MCF 10A (cell line): ENCODE measurements at regions of chr10 and their contacts with region 1.

Region 1: GRCh38 chr10:72692057-72692910 is at the start of gene MCU:
- DNase-seq: peak; percentile 41
- H3K4me3 Mint-ChIP-seq: peak within 1 kb of the TSS; percentile 80
- H3K27ac Mint-ChIP-seq: peak within 1 kb of the TSS; percentile 17
- H3K4me1 Mint-ChIP-seq: peaks cover 45% of the 10 kb centered on the region
- H3K27me3 Mint-ChIP-seq: no peaks in the 10 kb centered on the region
- CTCF ChIP-seq: no peak
- total RNA-seq, gene MCU: 14.0 and 19.2 TPM in 2 replicates

Region 2: GRCh38 chr10:72364239-72364777 is 328.0 kb before region 1 on chr10:
- CTCF ChIA-PET with region 1: interaction called, 35 read pairs
- POLR2A ChIA-PET with region 1: interaction called, 9 read pairs
- intact Hi-C with region 1: loop called (anchors 1 kb)
- DNase-seq: peak; percentile 94
- H3K4me3 Mint-ChIP-seq: peak overlapping the region; percentile 45
- H3K27ac Mint-ChIP-seq: no peak overlapping the region
- H3K4me1 Mint-ChIP-seq: peaks cover 7% of the 10 kb centered on the region
- H3K27me3 Mint-ChIP-seq: no peaks in the 10 kb centered on the region
- CTCF ChIP-seq: peak; percentile 91

Region 3: GRCh38 chr10:72625608-72626443 is 66.5 kb before region 1 on chr10 and contains the start of gene MICU1:
- CTCF ChIA-PET with region 1: no interaction called
- POLR2A ChIA-PET with region 1: interaction called, 44 read pairs
- intact Hi-C with region 1: no loop called
- DNase-seq: peak; percentile 96
- H3K4me3 Mint-ChIP-seq: peak within 1 kb of the TSS; percentile 75
- H3K27ac Mint-ChIP-seq: peak within 1 kb of the TSS; percentile 26
- H3K4me1 Mint-ChIP-seq: peaks cover 10% of the 10 kb centered on the region
- H3K27me3 Mint-ChIP-seq: no peaks in the 10 kb centered on the region
- CTCF ChIP-seq: no peak
- total RNA-seq, gene MICU1: 25.5 and 34.8 TPM in 2 replicates

Region 4: DNA sequence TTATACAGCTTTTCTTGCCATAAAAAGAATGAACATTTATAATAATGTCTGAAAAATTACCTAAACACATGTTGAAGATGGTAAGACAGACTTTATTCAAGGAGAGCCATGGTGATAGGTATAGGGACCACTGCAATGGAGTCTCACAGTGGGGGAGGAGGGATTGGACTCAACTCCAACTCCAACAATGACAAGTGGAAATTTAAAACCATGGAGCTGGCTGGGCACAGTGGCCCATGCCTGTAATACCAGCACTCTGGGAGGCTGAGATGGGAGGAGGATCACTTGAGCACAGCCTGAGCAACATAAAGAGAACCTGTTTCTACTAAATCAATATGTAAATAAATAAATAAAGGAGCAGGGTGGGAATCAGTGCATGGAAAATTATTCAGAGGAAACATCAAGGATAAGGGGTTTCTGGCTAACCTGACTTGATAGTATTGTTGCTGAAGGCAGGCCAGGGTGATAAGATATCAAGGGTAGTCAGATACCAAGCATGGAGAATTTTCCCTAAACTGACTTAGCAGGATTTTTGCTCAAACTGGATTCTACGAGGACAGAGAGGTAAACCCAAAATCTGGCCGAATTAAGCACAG is 46.9 kb before region 1 on chr10:
- CTCF ChIA-PET with region 1: no interaction called
- POLR2A ChIA-PET with region 1: no interaction called
- intact Hi-C with region 1: no loop called
- DNase-seq: no peak
- H3K4me3 Mint-ChIP-seq: no peak overlapping the region
- H3K27ac Mint-ChIP-seq: no peak overlapping the region
- H3K4me1 Mint-ChIP-seq: no peaks in the 10 kb centered on the region
- H3K27me3 Mint-ChIP-seq: no peaks in the 10 kb centered on the region
- CTCF ChIP-seq: no peak

Region 5: DNA sequence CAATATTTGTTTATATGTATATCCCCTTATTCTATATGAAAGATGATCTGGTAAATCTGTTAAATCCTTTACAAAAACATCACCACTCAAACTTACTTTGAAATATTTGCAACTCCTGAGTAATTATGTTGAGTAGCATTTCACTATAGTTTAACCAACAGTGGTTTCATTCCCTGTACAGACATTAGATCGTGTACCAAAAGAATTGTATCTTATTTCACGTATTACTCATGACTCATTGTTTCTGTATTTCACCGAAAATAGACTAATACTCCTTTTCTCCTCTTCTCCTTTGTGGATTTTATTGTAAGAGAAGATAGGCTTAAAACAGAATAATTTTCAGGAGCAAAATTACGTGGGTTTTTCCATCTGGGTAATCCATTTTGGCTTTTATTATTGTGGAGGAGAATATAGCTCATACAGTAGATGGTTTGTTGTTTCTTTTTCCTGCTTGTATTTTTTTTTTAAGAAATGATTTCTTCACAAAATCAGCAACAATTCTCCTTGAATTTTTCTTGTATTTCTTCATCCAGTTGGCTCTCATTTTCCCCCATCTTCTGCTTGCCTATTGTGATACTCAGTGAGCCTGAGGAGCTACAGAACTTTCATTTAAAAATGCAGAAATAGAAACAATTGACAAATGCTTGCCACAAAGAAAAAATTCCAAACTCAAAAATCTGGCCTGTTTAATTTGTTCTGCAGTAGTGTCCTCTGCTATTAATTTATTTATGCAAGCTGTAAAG is 110.7 kb after region 1 on chr10:
- CTCF ChIA-PET with region 1: interaction called, 6 read pairs
- POLR2A ChIA-PET with region 1: interaction called, 10 read pairs
- intact Hi-C with region 1: no loop called
- DNase-seq: peak; percentile 48
- H3K4me3 Mint-ChIP-seq: peak overlapping the region; percentile 66
- H3K27ac Mint-ChIP-seq: peak overlapping the region; percentile 93
- H3K4me1 Mint-ChIP-seq: peaks cover 10% of the 10 kb centered on the region
- H3K27me3 Mint-ChIP-seq: no peaks in the 10 kb centered on the region
- CTCF ChIP-seq: no peak

Region 6: DNA sequence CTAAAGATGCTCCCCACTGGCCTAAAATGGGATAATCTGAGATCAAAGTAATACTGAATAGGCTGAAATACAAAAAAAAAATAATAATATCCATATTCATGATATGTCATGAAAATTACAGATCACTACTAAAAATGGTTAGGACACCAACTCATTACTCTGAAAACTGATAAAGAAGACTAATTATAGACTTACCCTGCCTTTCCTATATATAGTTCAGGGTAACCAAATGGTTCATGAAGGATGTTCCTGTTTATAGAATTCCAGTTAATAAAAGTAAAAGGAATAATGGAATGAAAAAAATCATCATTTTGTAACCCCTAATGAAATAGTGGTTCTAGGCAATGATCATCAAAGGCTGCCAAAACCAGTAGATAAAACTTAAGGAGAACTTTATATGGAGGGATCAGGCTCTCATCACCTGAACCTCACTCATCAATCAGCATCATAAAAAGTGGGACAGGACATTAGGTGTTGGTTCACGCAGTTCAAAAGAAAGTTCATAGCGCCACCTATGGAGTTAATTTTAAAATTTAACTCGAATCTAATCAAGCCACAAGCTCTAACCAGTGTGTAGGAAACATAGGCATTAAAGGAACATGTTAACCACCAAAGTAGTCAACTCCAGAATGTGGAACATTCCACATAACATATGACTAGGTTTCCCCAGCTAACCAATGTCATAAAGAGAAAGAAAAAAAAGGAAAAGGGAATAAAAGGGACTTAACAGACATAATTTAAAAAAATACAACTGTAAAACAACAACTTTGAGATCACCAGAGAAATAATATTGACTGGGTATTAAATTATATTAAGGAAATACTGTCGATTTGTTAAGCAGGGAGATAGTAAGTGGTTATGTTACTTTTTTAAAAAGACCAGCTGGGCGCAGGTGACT is 368.7 kb after region 1 on chr10:
- CTCF ChIA-PET with region 1: interaction called, 3 read pairs
- POLR2A ChIA-PET with region 1: no interaction called
- intact Hi-C with region 1: loop called (anchors 1 kb)
- DNase-seq: peak; percentile 65
- H3K4me3 Mint-ChIP-seq: no peak overlapping the region
- H3K27ac Mint-ChIP-seq: no peak overlapping the region
- H3K4me1 Mint-ChIP-seq: peaks cover 5% of the 10 kb centered on the region
- H3K27me3 Mint-ChIP-seq: no peaks in the 10 kb centered on the region
- CTCF ChIP-seq: peak; percentile 53